Mammary epithelial cell (primary cell): ENCODE measurements at regions of chr12 and their contacts with region 1.

Region 1: DNA sequence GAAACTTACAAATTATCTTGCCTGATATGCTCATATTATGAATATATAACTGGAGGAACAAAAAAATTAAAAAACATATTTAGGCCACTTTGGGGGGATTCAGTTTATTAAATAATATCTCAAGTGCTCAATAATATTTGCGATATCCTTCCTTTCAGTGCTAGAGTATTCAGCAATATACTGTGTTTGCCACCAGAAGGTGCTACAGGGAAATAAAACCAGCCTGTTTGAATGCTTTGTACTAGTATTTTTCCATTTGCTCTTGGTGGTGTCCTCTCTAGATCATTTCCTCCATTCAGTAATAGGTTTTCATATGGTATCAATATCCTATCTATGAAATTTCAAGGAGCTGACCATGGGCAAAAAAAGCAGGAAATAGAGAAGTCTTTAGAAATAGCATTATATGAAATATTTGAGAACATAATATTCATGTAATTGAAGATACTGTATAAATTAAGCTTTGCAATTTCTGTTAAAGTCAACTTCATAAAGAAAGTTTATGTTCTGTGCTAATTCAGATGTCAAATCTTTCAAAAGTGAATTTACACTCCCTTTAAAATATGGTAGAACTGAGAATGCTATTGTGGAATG is 106.2 kb upstream of the NAV3 start:
- DNase-seq: peak; percentile 25
- H3K4me3 ChIP-seq: no peak overlapping the region
- H3K27ac ChIP-seq: no peak overlapping the region
- H3K4me1 ChIP-seq: peaks cover 9% of the 10 kb centered on the region
- H3K27me3 ChIP-seq: no peaks in the 10 kb centered on the region
- CTCF ChIP-seq: peak; percentile 71 to 72

Region 2: DNA sequence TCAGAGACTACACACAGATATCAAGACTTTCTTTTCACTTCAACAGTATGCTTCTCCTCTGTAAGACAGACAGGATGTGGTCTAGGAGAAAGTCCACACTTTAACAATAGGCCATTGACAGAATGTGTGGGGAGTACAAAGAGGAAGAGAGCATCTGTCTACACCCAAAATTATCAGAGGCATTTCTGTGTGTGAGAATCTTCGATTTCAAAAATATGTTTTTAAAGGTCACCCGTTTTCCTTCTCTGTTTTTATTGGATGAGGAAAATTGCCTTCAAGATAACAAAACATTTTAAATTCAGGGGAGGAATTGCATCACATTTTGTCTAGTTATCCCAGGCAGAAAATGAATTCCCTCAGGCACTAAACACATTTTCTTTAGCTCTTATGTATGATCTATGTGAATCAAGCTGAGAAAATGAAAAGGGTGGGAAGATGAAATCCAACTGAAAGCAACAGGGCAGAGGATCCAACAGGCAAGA is 122.6 kb after region 1 on chr12:
- CTCF ChIA-PET with region 1: no interaction called
- dilution Hi-C with region 1: no loop called
- in situ Hi-C with region 1: no loop called
- intact Hi-C with region 1: loop called (anchors 5 kb)
- DNase-seq: peak; percentile 67
- H3K4me3 ChIP-seq: peak overlapping the region in 1 of 3 experiments; percentile 0
- H3K27ac ChIP-seq: peak overlapping the region; percentile 65
- H3K4me1 ChIP-seq: peaks cover 31% of the 10 kb centered on the region
- H3K27me3 ChIP-seq: no peaks in the 10 kb centered on the region
- CTCF ChIP-seq: no peak

Region 3: DNA sequence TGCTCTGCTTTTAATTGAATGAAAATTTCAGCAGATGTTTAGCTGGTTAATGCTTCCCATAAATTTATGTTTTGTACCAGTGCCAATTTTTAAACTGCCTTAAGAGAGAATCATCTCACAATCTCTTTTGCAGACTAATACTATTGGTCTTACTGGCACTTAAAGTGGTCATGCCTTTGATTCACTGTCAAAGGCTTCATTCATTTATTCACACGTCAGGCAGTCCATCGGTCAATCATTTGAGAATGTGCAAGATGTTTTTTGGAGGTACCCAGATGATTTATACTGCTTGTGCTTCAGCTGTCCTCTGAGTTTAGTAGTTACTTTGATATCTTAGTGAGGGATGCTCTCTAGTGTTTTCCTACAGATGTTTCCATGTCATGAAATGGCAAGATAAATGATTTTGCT is 189.6 kb after region 1 on chr12:
- CTCF ChIA-PET with region 1: no interaction called
- dilution Hi-C with region 1: loop called (anchors 10 kb)
- in situ Hi-C with region 1: no loop called
- intact Hi-C with region 1: no loop called
- DNase-seq: no peak
- H3K4me3 ChIP-seq: no peak overlapping the region
- H3K27ac ChIP-seq: no peak overlapping the region
- H3K4me1 ChIP-seq: peaks cover 5% of the 10 kb centered on the region
- H3K27me3 ChIP-seq: no peaks in the 10 kb centered on the region
- CTCF ChIP-seq: no peak

Region 4: DNA sequence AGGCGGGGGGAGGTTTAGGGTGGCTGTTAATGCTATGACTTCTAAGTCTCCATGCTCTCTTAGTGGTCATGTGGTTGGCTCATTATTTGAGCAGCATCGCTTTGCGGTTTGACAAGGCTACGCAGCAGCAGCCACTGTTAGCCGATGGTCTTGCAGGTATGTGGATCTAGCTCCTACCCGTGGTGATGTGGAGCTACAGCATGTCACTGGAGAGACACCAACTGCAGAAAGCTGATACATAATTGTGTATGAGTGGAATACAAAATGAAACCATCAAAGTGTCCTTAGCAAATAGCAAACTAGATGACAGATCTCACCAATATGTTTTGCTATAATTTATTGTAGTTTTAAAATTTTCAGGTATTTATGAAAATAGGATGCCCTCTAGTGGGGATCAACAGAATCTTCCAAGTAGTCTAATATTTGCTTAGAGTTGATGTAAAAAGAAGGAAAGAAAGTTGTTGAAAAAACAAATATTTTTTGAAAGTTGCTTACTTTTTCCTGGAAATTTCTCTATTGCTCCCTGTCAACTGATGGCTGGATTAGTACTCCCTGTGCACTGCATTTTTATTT is 201.2 kb after region 1 on chr12:
- CTCF ChIA-PET with region 1: interaction called, 15 read pairs
- dilution Hi-C with region 1: no loop called
- in situ Hi-C with region 1: loop called (anchors 5 to 10 kb)
- intact Hi-C with region 1: loop called (anchors 1 kb)
- DNase-seq: peak; percentile 77
- H3K4me3 ChIP-seq: no peak overlapping the region
- H3K27ac ChIP-seq: no peak overlapping the region
- H3K4me1 ChIP-seq: peaks cover 5% of the 10 kb centered on the region
- H3K27me3 ChIP-seq: no peaks in the 10 kb centered on the region
- CTCF ChIP-seq: peak; percentile 98 to 99